Dorsolateral prefrontal cortex (tissue), 120 donors: ENCODE measurements at regions of chr16 and their contacts with region 1.

Region 1: DNA sequence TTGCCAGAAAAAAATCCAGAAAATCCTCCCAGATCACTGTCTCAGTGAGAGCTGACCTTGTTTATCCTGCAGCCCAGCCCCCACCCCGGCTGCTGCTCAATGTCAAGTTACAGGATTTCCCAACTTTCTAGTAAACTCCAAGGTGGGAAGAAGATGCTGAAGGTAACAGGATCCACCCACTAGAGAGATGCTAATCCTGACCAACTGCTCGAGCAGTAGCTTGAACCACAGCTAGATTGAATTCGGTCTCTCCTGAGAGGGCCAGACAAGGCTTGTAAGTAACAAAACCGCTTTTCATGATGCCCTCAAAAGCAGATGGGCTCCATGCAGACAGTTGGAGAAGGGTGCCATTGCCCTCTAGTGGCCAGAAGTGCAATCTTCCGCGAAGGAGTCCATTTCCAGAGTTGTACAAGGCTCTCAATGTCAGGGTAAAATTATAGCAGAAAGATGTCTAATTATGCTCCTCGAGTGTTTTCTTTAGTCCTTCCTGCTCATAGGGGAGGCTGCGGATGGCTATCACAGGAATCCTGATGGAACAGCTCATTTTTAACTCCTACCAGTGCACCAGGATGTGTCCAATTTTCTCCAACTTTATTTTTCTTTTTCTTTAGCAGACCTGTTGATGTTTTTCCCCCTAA is 3.9 kb downstream of the CDH11 start:
- DNase-seq: peak; percentile 58 to 90 (median 84)
- H3K4me3 ChIP-seq: peak overlapping the region in 58 of 59 donors; percentile 3 to 83 (median 42)
- H3K27ac ChIP-seq: peak overlapping the region in 57 of 59 donors; percentile 6 to 93 (median 83)
- H3K27me3 ChIP-seq: no peaks in the 10 kb centered on the region
- CTCF ChIP-seq: peak; percentile 78 to 99 (median 92)

Region 2: GRCh38 chr16:63461248-63461841 is 1656.6 kb before region 1 on chr16:
- intact Hi-C with region 1: loop called in 1 of 2 experiments (anchors 10 kb)
- DNase-seq: peak in 3 of 10 donors; percentile 3 to 44 (median 38)
- H3K4me3 ChIP-seq: no peak overlapping the region
- H3K27ac ChIP-seq: no peak overlapping the region
- H3K27me3 ChIP-seq: no peaks in the 10 kb centered on the region
- CTCF ChIP-seq: peak in 55 of 56 donors; percentile 25 to 79 (median 55)

Region 3: GRCh38 chr16:64596196-64596595 is 521.7 kb before region 1 on chr16:
- intact Hi-C with region 1: no loop called
- DNase-seq: no peak
- H3K4me3 ChIP-seq: no peak overlapping the region
- H3K27ac ChIP-seq: no peak overlapping the region
- H3K27me3 ChIP-seq: no peaks in the 10 kb centered on the region
- CTCF ChIP-seq: no peak

Region 4: DNA sequence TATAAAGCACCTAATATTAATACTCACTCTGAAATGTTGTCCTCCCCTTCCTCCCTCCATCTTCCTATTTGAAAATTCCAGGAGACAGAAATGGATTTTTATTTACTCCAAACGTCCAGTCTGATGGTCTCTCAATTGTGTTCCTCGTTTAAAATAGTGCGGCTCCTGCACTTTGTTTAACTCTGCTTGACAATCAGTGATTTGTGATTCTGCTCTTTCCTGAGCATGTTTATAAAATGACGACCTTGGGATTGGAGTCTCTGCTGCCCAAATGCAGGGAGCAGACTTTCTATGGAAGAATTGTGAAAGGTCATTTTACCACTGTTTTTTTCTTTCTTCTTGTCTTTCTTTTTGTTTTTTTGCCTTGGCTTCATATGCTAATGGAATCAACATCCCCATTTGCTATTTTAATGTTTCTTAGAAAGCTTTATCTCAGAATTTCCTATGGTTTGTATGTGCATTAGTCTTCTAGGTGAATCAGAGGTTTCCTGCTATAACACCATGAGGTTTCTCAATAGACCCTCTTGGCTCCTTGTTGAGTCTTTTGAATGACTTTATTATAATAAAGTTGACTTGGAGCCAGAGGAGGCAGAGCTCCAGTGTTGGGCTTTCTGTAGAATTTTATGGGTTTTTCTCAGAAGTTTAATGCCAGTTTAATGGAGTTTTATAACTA is 372.5 kb before region 1 on chr16:
- intact Hi-C with region 1: loop called in 1 of 2 experiments (anchors 5 kb)
- DNase-seq: no peak
- H3K4me3 ChIP-seq: no peak overlapping the region
- H3K27ac ChIP-seq: no peak overlapping the region
- H3K27me3 ChIP-seq: no peaks in the 10 kb centered on the region
- CTCF ChIP-seq: no peak

Region 5: DNA sequence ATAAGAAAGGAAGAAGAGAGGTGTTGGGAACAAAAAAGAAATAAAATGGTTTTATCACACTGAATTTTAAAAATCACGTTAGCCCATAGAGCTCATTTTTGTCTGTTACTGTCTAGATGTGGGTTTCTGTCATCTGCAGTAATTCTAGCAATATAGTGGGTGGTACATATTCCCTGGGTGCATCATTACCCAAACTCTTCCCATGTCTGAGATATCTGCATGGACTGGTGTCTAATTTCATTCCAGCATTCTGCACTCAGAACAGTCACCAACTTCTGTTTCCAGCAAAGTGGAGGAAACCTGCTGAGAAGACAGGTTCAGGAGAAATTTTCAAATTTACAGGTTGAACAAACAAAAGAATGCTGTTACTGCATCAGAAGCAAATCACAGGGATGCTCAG is 259.9 kb before region 1 on chr16:
- intact Hi-C with region 1: no loop called
- DNase-seq: no peak
- H3K4me3 ChIP-seq: no peak overlapping the region
- H3K27ac ChIP-seq: no peak overlapping the region
- H3K27me3 ChIP-seq: no peaks in the 10 kb centered on the region
- CTCF ChIP-seq: no peak

Region 6: DNA sequence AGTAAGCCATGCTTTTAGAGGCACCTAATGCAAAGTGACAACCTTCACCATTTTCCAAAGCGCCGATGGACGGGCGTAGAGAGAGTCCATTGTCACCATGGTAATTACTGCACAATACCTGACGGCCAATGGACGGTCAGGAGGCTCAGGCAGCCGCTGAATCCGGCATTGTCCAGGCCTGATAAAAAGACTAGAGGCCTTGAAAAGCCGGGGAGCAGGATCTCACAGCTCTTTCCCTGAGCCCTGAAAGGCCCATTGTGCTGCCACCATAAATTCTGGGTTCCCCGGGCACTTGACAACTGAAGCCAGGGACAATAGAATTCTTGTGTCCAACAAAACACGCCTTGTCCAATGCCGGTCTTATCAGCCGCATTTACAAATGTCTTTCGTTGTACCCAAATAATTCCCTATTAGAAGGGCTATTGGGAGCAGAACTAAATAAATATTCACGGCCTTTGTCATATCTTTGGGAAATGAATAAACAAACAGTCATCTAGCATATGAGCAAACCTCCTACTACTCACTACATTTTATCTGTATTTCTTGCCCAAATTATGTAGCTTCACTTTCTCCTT is 58.4 kb before region 1 on chr16:
- intact Hi-C with region 1: loop called in 1 of 2 experiments (anchors 5 kb)
- DNase-seq: peak; percentile 9 to 94 (median 88)
- H3K4me3 ChIP-seq: peak overlapping the region in 35 of 59 donors; percentile 2 to 54 (median 24)
- H3K27ac ChIP-seq: peak overlapping the region; percentile 60 to 96 (median 89)
- H3K27me3 ChIP-seq: no peaks in the 10 kb centered on the region
- CTCF ChIP-seq: peak in 7 of 56 donors; percentile 11 to 33 (median 17)

Region 7: GRCh38 chr16:65213866-65214595 is 96.1 kb after region 1 on chr16:
- intact Hi-C with region 1: no loop called
- DNase-seq: no peak
- H3K4me3 ChIP-seq: no peak overlapping the region
- H3K27ac ChIP-seq: no peak overlapping the region
- H3K27me3 ChIP-seq: no peaks in the 10 kb centered on the region
- CTCF ChIP-seq: no peak

Region 8: DNA sequence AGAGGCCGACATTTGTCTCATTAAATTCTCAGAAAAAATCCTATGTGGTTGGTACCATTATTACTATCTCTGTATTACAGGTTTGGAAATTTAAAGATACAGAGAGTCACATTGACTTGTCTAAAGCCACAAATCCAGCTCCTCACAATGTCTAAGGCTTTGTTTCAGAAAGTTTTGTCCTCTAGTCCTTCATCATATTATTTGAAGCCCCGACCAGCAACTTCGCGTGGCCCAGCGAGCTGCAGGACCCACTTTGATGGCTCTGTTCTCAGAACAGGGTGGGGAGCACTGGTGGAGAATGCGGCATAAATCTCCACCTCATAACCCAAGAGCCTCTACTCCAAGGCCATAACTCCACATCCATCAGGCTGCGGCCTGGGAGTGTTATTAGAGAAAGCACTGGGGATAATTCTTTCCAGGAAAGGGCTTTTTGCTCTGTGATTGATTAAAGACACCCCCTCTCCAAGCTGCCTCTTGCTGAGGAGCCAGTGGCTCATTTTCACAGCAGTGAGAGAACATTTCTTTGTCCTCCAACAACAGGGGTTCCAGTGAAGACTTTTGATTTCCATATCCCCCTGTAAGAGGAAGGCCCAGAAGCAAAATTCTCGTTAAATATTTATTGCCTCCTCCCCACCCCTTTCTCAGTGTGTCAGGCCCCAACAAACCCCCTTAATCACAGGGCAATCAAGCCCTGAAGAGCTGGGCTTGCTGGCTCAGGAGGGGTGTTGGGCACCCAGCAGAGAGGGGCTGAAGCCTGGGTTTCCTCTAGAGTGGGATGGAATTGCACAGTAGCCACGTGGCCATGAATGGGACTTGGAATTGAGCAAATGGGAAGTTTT is 117.6 kb after region 1 on chr16:
- intact Hi-C with region 1: no loop called
- DNase-seq: no peak
- H3K4me3 ChIP-seq: no peak overlapping the region
- H3K27ac ChIP-seq: no peak overlapping the region
- H3K27me3 ChIP-seq: no peaks in the 10 kb centered on the region
- CTCF ChIP-seq: no peak

Region 9: GRCh38 chr16:66270333-66270927 is 1152.5 kb after region 1 on chr16:
- intact Hi-C with region 1: loop called in 1 of 2 experiments (anchors 5 kb)
- DNase-seq: peak in 9 of 10 donors; percentile 39 to 88 (median 56)
- H3K4me3 ChIP-seq: peak overlapping the region in 58 of 59 donors; percentile 17 to 68 (median 52)
- H3K27ac ChIP-seq: peak overlapping the region in 3 of 59 donors; percentile 16 to 28 (median 25)
- H3K27me3 ChIP-seq: no peaks in the 10 kb centered on the region
- CTCF ChIP-seq: peak; percentile 80 to 100 (median 97)